Dorsolateral prefrontal cortex (tissue), 120 donors: ENCODE measurements at regions of chr17 and their contacts with region 1.

Region 1: GRCh38 chr17:79074650-79075445 is at the start of gene ENGASE:
- DNase-seq: peak; percentile 89 to 98 (median 94)
- H3K4me3 ChIP-seq: peak within 1 kb of the TSS; percentile 47 to 96 (median 82)
- H3K27ac ChIP-seq: peak within 1 kb of the TSS; percentile 20 to 93 (median 83)
- H3K27me3 ChIP-seq: no peaks in the 10 kb centered on the region
- CTCF ChIP-seq: peak in 13 of 56 donors; percentile 6 to 44 (median 16)
- total RNA-seq, gene ENGASE: 27.0 to 112 (median 43.6) TPM

Region 2: DNA sequence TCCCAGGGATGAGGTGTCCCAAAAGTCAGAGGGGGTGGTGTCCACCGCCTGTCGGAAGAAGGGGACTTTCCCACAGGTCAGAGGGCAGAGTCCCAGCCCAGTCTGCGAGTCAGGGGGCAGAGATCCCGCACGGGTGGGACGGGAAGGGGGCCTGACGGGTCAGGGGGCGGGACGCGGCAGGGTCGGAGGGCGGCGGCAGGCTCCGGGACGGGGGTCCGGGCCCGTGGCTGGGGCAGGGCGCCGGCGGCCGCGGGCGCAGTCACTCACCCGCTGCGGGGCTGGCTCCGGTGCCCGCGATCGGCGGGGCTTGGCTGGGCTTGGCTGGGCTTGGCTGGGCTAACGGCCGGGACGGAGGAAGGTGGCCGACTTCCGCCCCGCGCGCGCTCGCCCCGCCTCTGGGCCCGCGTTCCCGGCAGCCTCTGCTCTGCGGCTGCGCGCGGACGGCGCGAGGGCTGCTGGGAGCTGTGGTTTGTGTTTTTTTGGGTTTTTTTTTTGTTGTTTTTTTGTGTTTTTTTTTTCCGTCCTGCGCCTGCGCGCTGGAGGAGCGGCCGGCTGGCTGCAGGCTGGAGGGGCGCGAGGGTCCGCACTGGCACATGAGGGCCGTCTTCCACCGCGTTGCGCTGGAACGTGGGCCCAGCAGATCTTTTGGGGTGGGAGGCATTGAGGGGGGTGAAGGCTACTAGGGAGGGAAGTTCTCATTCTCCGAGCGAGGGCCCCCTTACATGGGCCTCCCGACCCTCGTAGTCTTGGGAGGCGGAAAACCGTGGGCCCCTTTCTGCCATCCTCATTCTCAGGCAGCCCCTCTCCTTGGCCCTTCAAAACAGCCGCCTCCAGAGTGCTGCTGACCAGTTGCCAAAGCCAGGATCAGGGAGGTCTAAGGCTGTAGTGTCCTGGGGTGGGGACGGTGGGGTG is 65.2 kb before region 1 on chr17 and contains the start of gene CANT1:
- intact Hi-C with region 1: loop called in 1 of 2 experiments (anchors 5 kb)
- DNase-seq: peak in 9 of 10 donors; percentile 60 to 89 (median 76)
- H3K4me3 ChIP-seq: peak within 1 kb of the TSS; percentile 52 to 99 (median 81)
- H3K27ac ChIP-seq: peak within 1 kb of the TSS; percentile 70 to 98 (median 93)
- H3K27me3 ChIP-seq: no peaks in the 10 kb centered on the region
- CTCF ChIP-seq: peak in 30 of 56 donors; percentile 6 to 53 (median 26)
- total RNA-seq, gene CANT1: 20.0 to 55.3 (median 29.7) TPM